OCI-LY7 (cell line): ENCODE measurements at regions of chr6 and their contacts with region 1.

Region 1: GRCh38 chr6:36678518-36679027 is at the start of gene CDKN1A:
- DNase-seq: peak; percentile 33
- H3K4me3 ChIP-seq: no peak within 1 kb of the TSS
- H3K27ac ChIP-seq: no peak within 1 kb of the TSS
- H3K4me1 ChIP-seq: peaks cover 58% of the 10 kb centered on the region
- CTCF ChIP-seq: no peak
- total RNA-seq, gene CDKN1A: 0.13 and 0.41 TPM in 2 replicates

Region 2: GRCh38 chr6:36615018-36615761 is 63.4 kb before region 1 on chr6:
- CTCF ChIA-PET with region 1: no interaction called
- POLR2A ChIA-PET with region 1: no interaction called
- intact Hi-C with region 1: loop called (anchors 2 kb)
- DNase-seq: peak; percentile 78
- H3K4me3 ChIP-seq: no peak overlapping the region
- H3K27ac ChIP-seq: no peak overlapping the region
- H3K4me1 ChIP-seq: peaks cover 14% of the 10 kb centered on the region
- CTCF ChIP-seq: peak; percentile 91

Region 3: GRCh38 chr6:36623547-36624459 is 54.8 kb before region 1 on chr6:
- CTCF ChIA-PET with region 1: no interaction called
- POLR2A ChIA-PET with region 1: no interaction called
- intact Hi-C with region 1: loop called (anchors 1 kb)
- DNase-seq: peak; percentile 83
- H3K4me3 ChIP-seq: no peak overlapping the region
- H3K27ac ChIP-seq: no peak overlapping the region
- H3K4me1 ChIP-seq: peaks cover 22% of the 10 kb centered on the region
- CTCF ChIP-seq: peak; percentile 96

Region 4: DNA sequence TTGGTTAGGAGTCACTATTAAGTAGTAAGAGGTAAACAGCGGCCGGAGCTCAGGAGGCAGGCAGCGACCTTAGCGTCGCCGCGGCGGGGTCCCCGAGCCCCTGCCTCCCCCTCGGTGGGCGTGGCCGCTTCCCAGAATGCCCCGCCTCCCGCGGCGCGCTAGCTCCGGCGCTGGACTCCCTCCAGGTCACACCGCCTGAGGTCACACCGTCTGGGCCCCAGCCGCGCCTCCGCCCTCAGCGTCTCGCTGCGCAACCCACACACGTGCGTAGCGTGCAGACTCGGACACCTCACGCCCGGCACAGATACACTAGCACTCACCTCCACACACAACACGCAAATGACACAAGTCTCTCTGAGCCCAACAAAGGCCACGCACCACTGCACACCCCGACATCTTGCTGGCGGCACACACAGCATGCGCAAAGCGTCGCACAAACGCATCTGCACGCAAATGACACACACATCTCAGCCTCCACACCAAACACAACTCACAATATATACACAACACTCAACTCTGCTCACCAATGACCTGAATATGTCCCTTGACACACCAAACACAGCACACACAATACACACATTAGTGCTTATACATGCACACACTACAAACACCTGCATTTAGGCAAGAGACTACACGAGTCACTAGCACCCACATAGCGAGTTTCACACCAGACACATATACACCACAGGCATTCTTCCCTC is 17.7 kb before region 1 on chr6:
- CTCF ChIA-PET with region 1: interaction called, 5 read pairs
- POLR2A ChIA-PET with region 1: interaction called, 18 read pairs
- intact Hi-C with region 1: loop called (anchors 1 kb)
- DNase-seq: no peak
- H3K4me3 ChIP-seq: no peak overlapping the region
- H3K27ac ChIP-seq: no peak overlapping the region
- H3K4me1 ChIP-seq: peaks cover 91% of the 10 kb centered on the region
- CTCF ChIP-seq: no peak

Region 5: DNA sequence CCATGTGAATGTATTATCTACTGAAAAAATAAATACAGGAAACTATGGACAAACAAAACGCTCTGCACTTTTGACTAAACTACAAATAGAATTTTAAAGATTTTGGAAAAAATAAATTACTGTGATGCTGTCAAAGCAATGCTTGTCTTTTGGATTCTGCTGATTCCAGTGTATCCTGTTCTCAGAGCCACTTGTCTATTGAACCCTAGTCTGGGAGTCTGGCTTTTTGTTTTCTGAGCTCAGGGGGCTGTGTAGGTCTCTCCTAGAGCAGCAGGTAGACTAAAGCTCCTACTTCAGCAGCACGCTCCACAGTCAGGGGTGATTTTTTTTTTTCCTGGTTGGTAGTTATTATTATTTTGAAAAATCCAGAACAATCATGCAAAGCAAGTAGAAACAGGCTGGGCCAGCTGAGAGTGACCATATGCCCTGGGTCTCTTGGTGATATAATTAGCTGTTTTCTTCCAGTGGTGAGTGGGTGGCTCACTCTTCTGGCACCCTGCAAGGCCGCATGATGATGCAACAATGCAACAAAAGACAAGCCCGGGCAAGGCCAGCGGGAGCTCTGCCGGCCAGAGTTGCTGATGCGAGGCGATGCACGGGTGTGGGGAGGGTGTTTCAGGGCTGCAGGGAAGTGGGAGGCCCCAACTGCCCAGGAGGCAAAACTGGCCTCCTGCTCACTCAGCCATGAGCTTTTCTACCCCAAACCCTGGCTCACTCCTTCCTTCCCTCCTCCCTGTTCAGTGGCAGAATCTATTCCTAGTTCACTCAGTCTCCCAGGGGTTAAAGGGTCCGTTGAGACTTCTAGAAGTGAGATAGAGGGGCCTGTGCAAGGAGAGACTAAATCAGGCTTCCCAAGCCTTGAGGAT is 11.6 kb before region 1 on chr6:
- CTCF ChIA-PET with region 1: interaction called, 5 read pairs
- POLR2A ChIA-PET with region 1: interaction called, 18 read pairs
- intact Hi-C with region 1: loop called (anchors 1 kb)
- DNase-seq: peak; percentile 74
- H3K4me3 ChIP-seq: peak overlapping the region; percentile 25
- H3K27ac ChIP-seq: peak overlapping the region; percentile 28
- H3K4me1 ChIP-seq: peaks cover 65% of the 10 kb centered on the region
- CTCF ChIP-seq: no peak

Region 6: GRCh38 chr6:36701401-36701991 is 22.9 kb after region 1 on chr6:
- CTCF ChIA-PET with region 1: no interaction called
- POLR2A ChIA-PET with region 1: interaction called, 6 read pairs
- intact Hi-C with region 1: loop called (anchors 2 kb)
- DNase-seq: peak; percentile 69
- H3K4me3 ChIP-seq: no peak overlapping the region
- H3K27ac ChIP-seq: no peak overlapping the region
- H3K4me1 ChIP-seq: peaks cover 5% of the 10 kb centered on the region
- CTCF ChIP-seq: peak; percentile 89

Region 7: DNA sequence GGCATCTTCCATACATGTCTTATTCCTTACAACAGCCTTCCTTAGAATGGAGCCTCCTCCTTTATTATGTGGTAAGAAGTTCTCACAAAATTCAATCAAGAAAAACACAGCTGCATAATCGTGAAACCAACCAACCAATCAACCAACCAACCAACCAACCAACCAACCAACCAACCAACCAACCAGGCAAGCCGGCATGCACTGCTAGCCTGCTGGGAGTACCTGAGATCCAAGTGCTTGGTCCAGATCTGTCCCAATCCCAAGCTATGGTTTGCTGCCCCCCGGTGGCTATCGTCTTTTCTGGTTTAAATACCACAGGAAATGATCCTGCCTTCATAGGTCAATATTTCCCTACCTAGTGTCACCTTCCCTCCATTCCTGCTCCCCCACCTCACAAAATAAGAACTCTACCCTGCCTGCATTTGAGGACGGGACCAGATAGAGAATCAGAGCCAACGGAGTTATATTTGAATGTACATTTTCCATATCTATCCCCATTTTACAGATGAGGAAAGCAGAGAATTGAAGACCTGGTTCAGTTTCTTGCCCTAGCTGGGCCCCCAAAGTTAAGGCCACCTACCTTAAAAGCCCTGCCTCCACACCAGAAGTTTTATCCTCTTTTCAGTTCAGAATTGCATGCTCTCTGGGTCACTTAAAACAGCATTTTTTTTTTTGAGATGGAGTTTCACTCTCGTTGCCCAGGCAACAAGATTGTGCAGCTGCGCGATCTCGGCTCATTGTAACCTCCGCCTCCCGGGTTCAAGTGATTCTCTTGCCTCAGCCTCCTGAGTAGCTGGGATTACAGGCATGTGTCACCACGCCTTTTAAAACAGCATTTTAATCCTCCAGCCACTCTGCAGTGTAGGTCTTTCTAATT is 46.2 kb after region 1 on chr6:
- CTCF ChIA-PET with region 1: interaction called, 3 read pairs
- POLR2A ChIA-PET with region 1: interaction called, 3 read pairs
- intact Hi-C with region 1: loop called (anchors 1 kb)
- DNase-seq: peak; percentile 64
- H3K4me3 ChIP-seq: no peak overlapping the region
- H3K27ac ChIP-seq: no peak overlapping the region
- H3K4me1 ChIP-seq: peaks cover 28% of the 10 kb centered on the region
- CTCF ChIP-seq: peak; percentile 79